ENCODE measurements at regions of chr6 and their contacts with region 1.

Region 1: DNA sequence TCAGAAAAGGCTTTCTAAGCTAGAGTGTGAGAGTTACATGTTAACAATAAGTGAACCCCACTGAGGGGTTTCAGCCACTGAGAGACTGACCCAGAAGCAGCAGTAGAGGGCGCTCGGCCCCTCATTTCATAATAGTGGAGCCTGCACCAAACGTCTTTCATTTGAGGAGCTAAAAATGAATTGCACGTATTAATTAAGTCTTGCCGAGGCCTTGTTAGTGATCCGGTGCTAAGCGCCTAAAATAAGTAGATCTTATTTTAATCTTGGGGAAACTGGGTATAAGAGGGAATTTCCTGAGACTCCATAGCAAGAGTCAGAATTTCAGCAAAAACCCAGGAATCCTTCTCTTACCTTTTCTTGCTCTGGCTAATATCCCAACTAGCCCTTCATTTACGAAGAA is 209.7 kb downstream of the FARS2 start:
- DNase-seq: peak; percentile 73
- CTCF ChIP-seq: peak; percentile 70

Region 2: GRCh38 chr6:4612636-4613171 is 858.3 kb before region 1 on chr6:
- in situ Hi-C with region 1: no loop called
- DNase-seq: no peak
- CTCF ChIP-seq: no peak

Region 3: GRCh38 chr6:5050009-5050408 is 421.0 kb before region 1 on chr6:
- in situ Hi-C with region 1: no loop called
- DNase-seq: no peak
- CTCF ChIP-seq: no peak

Region 4: GRCh38 chr6:5325173-5325572 is 145.9 kb before region 1 on chr6:
- in situ Hi-C with region 1: no loop called
- DNase-seq: no peak
- CTCF ChIP-seq: no peak

Region 5: GRCh38 chr6:5712349-5713215 is 241.5 kb after region 1 on chr6:
- in situ Hi-C with region 1: no loop called
- DNase-seq: no peak
- CTCF ChIP-seq: no peak

Region 6: GRCh38 chr6:5995949-5996713 is 525.1 kb after region 1 on chr6:
- in situ Hi-C with region 1: loop called (anchors 25 kb)
- DNase-seq: no peak
- CTCF ChIP-seq: no peak

Region 7: GRCh38 chr6:6547110-6547879 is 1076.3 kb after region 1 on chr6:
- in situ Hi-C with region 1: loop called (anchors 25 kb)
- DNase-seq: peak; percentile 87
- CTCF ChIP-seq: peak; percentile 84